Activated CD4-positive, alpha-beta T cell treated with anti-CD3 and anti-CD28 coated beads for 36 hours (primary cell): ENCODE measurements at regions of chr1 and their contacts with region 1.

Region 1: DNA sequence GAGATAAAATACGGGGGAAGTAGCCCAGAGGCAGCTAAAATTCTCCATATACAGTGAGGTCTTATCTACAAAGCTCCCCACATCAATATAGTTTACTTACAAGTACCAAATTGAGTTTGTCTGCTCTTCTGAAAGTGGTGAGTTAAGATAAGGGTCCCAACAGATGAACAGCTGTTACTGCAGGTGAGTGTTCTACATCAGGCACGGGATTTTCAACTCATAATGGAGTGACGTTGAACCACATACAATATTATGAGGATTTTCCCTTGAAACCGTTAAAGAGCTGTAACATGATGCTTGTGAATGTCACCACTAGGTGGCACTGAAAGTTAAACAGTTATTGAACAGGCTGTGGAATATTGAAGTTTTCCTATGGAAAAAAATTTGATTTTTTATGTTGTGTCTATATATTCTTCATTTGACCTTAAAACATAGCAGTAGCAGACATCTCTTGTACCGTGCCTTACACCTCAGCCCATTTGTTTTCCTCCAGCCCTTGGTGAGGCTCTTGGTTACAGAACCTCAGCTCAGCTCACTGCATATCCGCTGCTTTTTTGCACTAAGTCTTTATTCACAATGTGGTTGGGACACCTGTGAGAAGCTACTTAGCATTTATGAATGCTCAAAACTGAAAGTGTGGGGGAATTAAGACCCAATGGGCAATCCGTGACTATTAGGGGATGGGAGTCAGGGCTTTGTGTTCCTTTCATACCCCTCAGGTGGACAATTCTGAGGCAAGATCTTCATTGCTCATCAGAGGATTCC is 23.2 kb downstream of the CD1D start:
- DNase-seq: peak; percentile 20
- ATAC-seq: peak; percentile 87
- H3K4me3 Mint-ChIP-seq: no peak overlapping the region
- H3K27ac Mint-ChIP-seq: no peak overlapping the region
- H3K4me1 Mint-ChIP-seq: peaks cover 9% of the 10 kb centered on the region
- H3K27me3 Mint-ChIP-seq: peaks cover 22% of the 10 kb centered on the region

Region 2: DNA sequence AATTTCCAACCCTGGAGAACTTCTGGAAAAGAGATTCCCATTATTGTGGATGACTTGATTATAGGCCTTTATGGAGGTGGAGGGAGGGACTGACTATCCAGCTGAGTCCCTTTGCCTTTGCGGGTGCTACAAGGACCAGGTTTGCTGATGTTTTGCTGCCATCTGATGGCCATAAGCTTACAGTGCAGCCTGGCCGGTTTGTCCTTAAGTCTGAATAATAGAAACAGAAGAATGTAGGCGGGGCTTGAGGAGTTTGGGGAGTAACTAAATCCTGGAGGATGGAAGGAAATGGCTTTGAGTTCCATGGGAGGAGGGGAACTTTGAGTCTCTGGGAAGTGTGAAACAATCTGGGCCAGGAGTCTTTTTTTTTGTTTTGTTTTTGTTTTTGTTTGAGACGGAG is 78.9 kb before region 1 on chr1:
- CTCF ChIA-PET with region 1: no interaction called
- POLR2A ChIA-PET with region 1: no interaction called
- intact Hi-C with region 1: no loop called
- DNase-seq: peak; percentile 82
- ATAC-seq: peak; percentile 95
- H3K4me3 Mint-ChIP-seq: no peak overlapping the region
- H3K27ac Mint-ChIP-seq: no peak overlapping the region
- H3K4me1 Mint-ChIP-seq: no peaks in the 10 kb centered on the region
- H3K27me3 Mint-ChIP-seq: peaks cover 16% of the 10 kb centered on the region

Region 3: GRCh38 chr1:158527190-158527815 is 323.4 kb after region 1 on chr1:
- CTCF ChIA-PET with region 1: interaction called, 4 read pairs
- POLR2A ChIA-PET with region 1: no interaction called
- intact Hi-C with region 1: loop called in 1 of 2 experiments (anchors 1 kb)
- DNase-seq: no peak
- ATAC-seq: no peak
- H3K4me3 Mint-ChIP-seq: no peak overlapping the region
- H3K27ac Mint-ChIP-seq: no peak overlapping the region
- H3K4me1 Mint-ChIP-seq: no peaks in the 10 kb centered on the region
- H3K27me3 Mint-ChIP-seq: peaks cover 10% of the 10 kb centered on the region